HepG2 (cell line): ENCODE measurements at regions of chr11 and their contacts with region 1.

Region 1: DNA sequence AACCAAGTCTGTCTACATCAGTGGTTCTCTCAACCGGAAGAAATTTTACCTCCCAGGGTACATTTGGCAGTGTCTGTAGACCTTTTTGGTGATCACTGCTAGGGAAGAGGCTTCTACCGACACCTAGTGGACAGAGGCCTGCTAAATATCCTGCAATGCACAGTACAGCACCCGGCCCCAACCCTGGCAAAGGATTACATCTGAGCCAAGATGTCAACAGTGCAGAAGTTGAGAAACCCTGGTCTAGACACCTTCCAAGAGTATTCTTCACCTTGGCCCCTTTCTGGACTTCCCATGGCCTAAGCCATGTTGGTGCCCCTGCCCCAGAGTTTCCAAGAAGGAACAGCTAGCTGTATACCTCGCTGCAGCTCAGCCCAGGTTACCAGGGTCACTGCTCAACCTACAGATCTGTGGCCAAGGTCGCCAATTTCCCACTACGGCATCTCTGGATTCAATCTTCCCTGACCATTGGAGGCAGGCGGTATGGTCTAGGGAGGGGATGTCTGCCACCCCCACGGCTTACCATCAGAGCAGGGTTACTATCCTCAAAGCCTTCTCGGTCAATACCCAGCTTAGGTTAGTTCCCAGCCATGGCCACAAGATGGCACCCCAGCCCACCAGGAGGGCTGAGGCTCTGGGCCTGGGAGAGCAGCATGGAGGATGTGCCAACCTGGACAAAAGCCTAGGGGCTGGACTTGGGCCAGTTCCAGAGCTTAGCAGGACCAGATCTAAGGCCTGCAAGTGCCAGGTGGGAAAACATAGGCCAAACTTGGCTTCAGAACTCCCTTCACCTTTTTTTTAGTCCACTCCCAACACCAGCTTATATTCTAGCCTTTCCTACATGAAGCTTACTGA is 3.7 kb upstream of the KCNC1 start:
- DNase-seq: peak; percentile 64
- ATAC-seq: peak; percentile 87
- H3K4me3 ChIP-seq: no peak overlapping the region
- H3K27ac ChIP-seq: no peak overlapping the region
- H3K4me1 ChIP-seq: no peaks in the 10 kb centered on the region
- H3K27me3 ChIP-seq: peaks cover 5 to 21% of the 10 kb centered on the region in 2 experiments; a peak in 3 of 5 replicates
- CTCF ChIP-seq: peak; percentile 95
- EP300 ChIP-seq: no peak
- POLR2A ChIP-seq: no peak
- RAD21 ChIP-seq: peak; percentile 81

Region 2: DNA sequence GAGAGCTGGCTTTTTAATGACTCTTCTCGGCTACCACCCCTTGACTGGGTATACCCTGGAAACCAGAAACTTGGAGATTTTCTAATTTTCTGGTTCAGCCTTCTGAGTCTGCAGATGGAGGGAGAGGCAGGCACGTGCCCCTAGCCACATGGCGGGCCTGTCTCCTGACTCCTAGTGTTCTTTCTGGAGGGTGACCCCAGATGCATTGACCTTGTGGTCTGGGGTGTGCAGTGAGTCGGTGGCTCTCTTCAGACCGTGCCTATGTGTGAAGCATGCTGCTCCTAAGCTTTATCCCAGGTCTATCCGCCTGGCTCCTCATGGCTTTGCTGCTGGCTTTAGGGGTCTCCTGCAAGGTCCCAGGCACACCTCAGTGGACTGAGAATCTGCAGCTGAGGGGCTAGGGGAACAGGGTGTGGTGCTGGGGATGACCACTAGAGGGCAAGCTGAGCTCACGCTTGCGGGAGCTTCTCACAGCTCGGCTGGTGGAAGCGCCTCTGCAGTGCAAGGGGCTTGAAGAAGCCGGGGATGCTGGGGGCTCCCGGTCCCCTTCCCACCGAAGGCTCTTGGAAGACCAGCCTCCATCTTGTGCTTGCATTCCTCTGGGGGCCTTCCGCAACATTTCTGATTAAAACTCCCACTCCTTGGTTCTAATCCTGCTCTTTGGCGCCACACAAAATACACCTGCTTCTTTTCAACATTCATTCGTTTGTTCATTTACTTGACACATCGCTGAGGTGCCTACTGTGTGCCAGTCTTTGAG is 132.0 kb before region 1 on chr11:
- CTCF ChIA-PET with region 1: interaction called, 3 read pairs
- POLR2A ChIA-PET with region 1: no interaction called
- in situ Hi-C with region 1: no loop called
- intact Hi-C with region 1: loop called (anchors 2 kb)
- DNase-seq: peak; percentile 37
- ATAC-seq: peak; percentile 94
- H3K4me3 ChIP-seq: no peak overlapping the region
- H3K27ac ChIP-seq: no peak overlapping the region
- H3K4me1 ChIP-seq: no peaks in the 10 kb centered on the region
- H3K27me3 ChIP-seq: peaks cover 3 to 18% of the 10 kb centered on the region in 2 experiments; a peak in 2 of 5 replicates
- CTCF ChIP-seq: peak; percentile 95
- EP300 ChIP-seq: no peak
- POLR2A ChIP-seq: no peak
- RAD21 ChIP-seq: peak; percentile 84

Region 3: DNA sequence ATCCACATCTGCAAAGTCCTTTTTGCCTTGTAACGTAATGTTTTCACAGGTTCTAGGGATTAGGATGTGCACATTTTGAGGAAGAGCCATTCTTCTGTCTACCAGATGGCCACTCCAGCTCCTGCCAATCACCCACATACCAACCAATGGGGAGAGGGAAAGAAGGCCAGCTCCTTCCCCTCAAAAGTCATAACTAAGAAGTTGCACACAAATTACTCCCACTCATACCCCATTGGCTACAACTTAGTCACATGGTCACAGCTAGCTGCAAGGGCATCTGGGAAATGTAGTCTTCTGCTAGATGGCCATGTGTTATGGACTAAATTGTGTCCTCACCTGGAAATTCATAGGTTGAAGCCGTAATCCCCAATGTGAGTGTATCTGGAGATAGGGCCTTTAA is 26.9 kb before region 1 on chr11:
- CTCF ChIA-PET with region 1: no interaction called
- POLR2A ChIA-PET with region 1: no interaction called
- in situ Hi-C with region 1: no loop called
- intact Hi-C with region 1: no loop called
- DNase-seq: no peak
- ATAC-seq: no peak
- H3K4me3 ChIP-seq: no peak overlapping the region
- H3K27ac ChIP-seq: no peak overlapping the region
- H3K4me1 ChIP-seq: no peaks in the 10 kb centered on the region
- H3K27me3 ChIP-seq: peaks cover 6 to 16% of the 10 kb centered on the region in 2 experiments; a peak in 4 of 5 replicates
- CTCF ChIP-seq: no peak
- EP300 ChIP-seq: no peak
- POLR2A ChIP-seq: no peak
- RAD21 ChIP-seq: no peak

Region 4: GRCh38 chr11:17827006-17827405 is 96.2 kb after region 1 on chr11:
- CTCF ChIA-PET with region 1: no interaction called
- POLR2A ChIA-PET with region 1: no interaction called
- in situ Hi-C with region 1: no loop called
- intact Hi-C with region 1: loop called (anchors 1 kb)
- DNase-seq: peak; percentile 7
- ATAC-seq: peak; percentile 62; the same call in 2 of the 3 replicates
- H3K4me3 ChIP-seq: no peak overlapping the region
- H3K27ac ChIP-seq: no peak overlapping the region
- H3K4me1 ChIP-seq: no peaks in the 10 kb centered on the region
- H3K27me3 ChIP-seq: no peaks in the 10 kb centered on the region
- CTCF ChIP-seq: peak; percentile 43
- EP300 ChIP-seq: no peak
- POLR2A ChIP-seq: no peak
- RAD21 ChIP-seq: no peak

Region 5: DNA sequence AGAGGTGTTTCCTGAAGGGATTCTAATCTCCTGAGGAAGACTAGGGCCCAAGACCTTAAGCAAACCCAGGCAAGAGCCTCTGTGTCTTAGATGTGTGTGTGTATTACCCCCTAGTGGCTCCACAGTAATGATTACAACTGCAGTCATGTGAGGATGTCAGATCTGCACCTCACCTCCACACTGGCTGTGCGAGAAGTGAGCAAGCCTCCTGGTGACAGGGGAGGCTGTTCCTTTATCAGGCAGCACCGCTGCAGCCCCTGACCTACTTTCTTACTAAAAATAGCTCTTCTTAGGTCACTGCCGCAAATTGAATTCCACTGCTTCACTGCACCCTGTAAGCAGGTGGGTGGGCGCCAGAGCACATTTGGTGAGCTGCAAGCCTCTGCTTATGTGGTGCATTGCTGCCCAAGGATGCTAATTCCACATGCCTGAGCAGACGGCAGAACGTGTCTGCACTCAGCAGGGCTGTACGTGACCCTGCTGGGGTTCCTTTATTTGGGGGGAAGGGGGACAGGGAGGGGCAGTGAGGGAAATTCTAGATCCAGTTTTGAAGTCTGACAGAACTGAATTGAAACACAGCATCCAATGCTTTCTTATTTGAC is 116.1 kb after region 1 on chr11:
- CTCF ChIA-PET with region 1: no interaction called
- POLR2A ChIA-PET with region 1: no interaction called
- in situ Hi-C with region 1: no loop called
- intact Hi-C with region 1: no loop called
- DNase-seq: no peak
- ATAC-seq: peak; percentile 62
- H3K4me3 ChIP-seq: no peak overlapping the region
- H3K27ac ChIP-seq: no peak overlapping the region
- H3K4me1 ChIP-seq: no peaks in the 10 kb centered on the region
- H3K27me3 ChIP-seq: no peaks in the 10 kb centered on the region
- CTCF ChIP-seq: peak; percentile 39
- EP300 ChIP-seq: no peak
- POLR2A ChIP-seq: no peak
- RAD21 ChIP-seq: no peak

Region 6: GRCh38 chr11:17892409-17892808 is 161.6 kb after region 1 on chr11:
- CTCF ChIA-PET with region 1: no interaction called
- POLR2A ChIA-PET with region 1: no interaction called
- in situ Hi-C with region 1: no loop called
- intact Hi-C with region 1: loop called (anchors 2 kb)
- DNase-seq: no peak
- ATAC-seq: no peak
- H3K4me3 ChIP-seq: no peak overlapping the region
- H3K27ac ChIP-seq: no peak overlapping the region
- H3K4me1 ChIP-seq: no peaks in the 10 kb centered on the region
- H3K27me3 ChIP-seq: no peaks in the 10 kb centered on the region
- CTCF ChIP-seq: no peak
- EP300 ChIP-seq: no peak
- POLR2A ChIP-seq: no peak
- RAD21 ChIP-seq: no peak

Region 7: DNA sequence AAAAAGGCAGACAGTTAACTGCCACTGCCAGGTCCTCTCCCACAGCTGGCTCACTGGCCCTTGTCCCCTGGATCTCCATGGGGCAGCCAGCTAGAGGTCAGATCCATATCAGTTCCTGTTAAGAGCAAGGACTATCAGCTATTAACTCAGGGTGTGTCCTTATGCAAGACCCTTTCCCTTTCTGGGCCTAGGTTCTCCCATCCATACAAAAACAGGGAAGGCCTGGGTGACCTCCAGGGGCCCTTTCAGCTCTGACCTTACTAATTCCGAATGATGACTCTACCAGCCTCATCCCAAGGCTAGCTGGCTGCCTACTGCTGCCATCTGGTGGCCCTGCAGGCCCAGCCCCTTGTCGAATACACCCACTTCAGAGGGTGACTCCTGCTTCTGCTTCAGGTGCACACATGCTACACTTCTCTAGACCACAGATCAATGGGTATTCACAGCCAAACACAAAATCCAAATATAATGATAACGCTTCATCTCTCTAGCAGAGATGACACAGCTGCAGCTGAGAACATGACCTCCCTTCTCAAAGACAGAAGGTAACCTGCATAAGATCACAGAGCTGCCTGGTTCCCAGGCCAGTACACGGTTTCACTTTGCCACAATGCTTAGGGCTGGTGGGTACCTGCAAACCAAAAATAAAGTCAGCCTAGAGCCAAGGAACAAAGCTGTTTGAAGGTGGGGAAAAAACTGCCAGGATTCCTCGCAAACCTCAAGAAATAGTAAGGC is 247.9 kb after region 1 on chr11:
- CTCF ChIA-PET with region 1: interaction called, 40 read pairs
- POLR2A ChIA-PET with region 1: interaction called, 7 read pairs
- in situ Hi-C with region 1: no loop called
- intact Hi-C with region 1: loop called (anchors 1 kb)
- DNase-seq: peak; percentile 59
- ATAC-seq: peak; percentile 95
- H3K4me3 ChIP-seq: no peak overlapping the region
- H3K27ac ChIP-seq: no peak overlapping the region
- H3K4me1 ChIP-seq: peaks cover 40% of the 10 kb centered on the region
- H3K27me3 ChIP-seq: no peaks in the 10 kb centered on the region
- CTCF ChIP-seq: peak; percentile 90
- EP300 ChIP-seq: no peak
- POLR2A ChIP-seq: no peak
- RAD21 ChIP-seq: peak; percentile 78